Prostate gland (tissue), 2 donors: ENCODE measurements at regions of chr2 and their contacts with region 1.

Region 1: DNA sequence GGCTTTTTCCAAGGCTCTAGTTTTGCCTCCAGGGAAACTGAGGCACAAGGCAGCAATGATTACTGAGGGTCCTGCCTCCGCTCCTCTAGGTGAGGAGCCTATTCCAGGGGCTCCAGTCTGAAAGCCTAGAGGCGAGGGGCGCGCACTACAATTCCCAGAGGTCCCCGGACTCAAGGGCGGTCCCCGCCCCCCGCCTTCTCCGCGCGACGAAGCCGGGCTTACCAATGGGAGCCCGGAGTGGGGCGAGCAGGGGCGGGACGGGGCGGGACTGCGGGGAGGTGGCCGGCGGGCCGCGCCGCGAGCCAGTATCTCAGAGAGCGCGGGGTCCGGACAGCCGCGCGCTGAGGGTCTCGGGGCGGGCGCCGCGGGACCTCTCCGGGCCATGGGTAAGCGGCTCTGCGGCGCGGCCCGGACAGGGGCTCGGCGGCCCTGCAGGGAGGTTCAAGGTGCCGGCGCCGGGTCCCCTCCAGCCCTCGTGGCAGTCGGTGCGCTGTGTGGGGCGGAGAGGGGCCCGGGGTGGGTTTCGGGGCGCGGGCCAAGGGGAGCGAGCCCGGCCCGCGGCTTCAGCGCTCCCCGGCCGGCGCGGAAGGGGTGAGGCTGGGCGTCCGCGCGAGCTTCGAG is at the start of gene ARID5A:
- DNase-seq: peak; percentile 93
- H3K4me3 ChIP-seq: peak within 1 kb of the TSS; percentile 63 to 64
- H3K27ac ChIP-seq: peak within 1 kb of the TSS; percentile 86 to 87
- H3K4me1 ChIP-seq: peaks cover 15% of the 10 kb centered on the region
- H3K27me3 ChIP-seq: no peaks in the 10 kb centered on the region
- CTCF ChIP-seq: peak in 3 of 4 experiments; percentile 14 to 68 (median 66)
- POLR2A ChIP-seq: peak; percentile 99
- total RNA-seq, gene ARID5A: 23.0 to 54.6 TPM

Region 2: DNA sequence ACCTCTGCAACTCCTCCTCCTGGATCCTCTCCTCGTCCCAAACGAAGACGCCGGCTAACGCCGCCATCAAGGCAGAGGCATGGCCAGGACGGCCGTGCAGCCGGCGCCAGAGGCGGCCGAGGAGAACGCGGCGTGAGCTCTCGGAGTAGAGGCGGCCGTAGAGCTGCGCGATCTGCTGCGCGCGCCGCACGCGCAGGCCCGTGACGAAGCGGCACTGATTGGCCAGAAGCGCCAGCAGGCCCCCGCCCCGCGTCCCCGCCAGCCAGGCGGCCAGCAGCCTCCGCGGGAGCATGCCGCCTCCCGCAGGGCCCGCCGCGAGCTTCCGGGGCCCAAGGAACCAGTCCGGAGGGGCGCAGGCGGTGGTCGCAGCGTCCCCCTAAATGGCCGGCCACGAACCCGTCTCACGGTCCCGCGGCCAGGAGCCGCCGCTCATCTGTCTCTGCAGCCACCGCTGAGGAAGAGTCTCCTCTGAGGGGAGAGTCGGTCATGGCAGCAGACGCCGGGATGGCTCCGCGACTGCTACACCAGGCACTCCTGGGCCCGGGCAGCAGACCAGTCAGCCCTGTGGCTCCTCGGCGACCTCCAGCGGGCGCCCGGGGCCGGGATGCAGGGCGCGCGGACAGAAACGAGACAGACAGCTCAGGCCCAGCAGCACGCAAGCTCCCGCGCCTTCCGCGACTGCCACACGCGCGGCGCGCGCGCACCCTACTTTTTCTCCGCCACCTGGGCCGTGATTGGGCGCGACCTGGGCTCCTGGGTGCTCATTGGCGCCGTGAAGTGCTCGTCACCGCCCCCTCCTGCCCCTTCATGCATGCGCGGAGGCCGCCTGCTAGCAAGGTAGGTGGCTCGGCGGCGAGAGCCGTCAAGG is 328.2 kb before region 1 on chr2 and contains the start of gene STARD7:
- intact Hi-C with region 1: loop called (anchors 10 kb)
- DNase-seq: peak; percentile 98
- H3K4me3 ChIP-seq: peak within 1 kb of the TSS; percentile 92 to 97
- H3K27ac ChIP-seq: peak within 1 kb of the TSS; percentile 91 to 93
- H3K4me1 ChIP-seq: peaks cover 12% of the 10 kb centered on the region
- H3K27me3 ChIP-seq: no peaks in the 10 kb centered on the region
- CTCF ChIP-seq: peak; percentile 8 to 36 (median 18)
- POLR2A ChIP-seq: peak; percentile 92
- total RNA-seq, gene STARD7: 93.1 to 141 TPM

Region 3: DNA sequence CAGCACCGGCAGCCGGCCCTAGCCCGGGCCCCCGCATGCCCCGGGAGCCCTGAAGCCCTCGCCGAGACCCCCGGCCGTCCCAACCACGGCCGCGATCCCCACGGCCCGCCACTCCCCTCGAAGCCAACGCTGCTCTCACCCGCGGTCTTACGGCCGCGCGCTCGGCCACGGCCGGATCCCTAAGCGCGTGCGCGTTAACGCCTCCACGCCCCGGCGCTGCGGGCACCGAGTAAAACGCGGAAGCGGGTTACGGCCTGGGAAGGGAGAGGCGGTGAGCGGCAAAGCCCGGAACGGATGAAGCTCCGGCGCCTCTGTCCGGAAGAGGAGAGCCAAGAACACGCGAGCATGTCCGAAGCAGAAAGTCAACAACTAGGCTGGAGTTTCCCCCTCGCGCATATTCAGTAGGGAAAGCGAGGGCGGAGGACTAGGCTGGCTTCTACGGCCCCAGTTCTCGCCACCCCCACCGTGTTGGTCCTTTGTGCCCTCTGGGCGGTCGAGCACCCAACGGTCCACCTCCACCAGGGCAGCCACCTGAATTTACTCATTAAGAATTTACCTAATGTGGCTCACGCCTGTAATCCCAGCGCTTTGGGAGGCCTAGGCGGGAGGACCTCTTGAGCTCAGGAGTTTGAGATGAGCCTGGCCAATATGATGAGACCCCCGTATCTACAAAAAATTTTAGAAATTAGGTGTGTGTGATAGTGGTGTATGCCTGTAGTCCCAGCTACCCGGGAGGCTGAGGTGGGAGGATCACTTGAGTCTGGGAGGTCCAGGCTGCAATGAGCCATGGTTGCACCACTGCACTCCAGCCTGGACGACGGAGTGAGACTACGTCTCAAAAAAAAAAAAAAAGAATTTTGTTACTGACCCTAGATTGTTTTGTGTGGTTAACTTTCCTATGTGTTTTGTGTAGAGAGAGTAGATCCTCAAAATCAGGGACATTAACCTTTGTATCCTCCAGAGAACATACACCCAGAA is 101.9 kb after region 1 on chr2 and contains the start of gene KANSL3:
- intact Hi-C with region 1: loop called (anchors 5 kb)
- DNase-seq: peak; percentile 85
- H3K4me3 ChIP-seq: peak within 1 kb of the TSS; percentile 82 to 89
- H3K27ac ChIP-seq: peak within 1 kb of the TSS; percentile 92 to 96
- H3K4me1 ChIP-seq: no peaks in the 10 kb centered on the region
- H3K27me3 ChIP-seq: no peaks in the 10 kb centered on the region
- CTCF ChIP-seq: peak in 2 of 4 experiments; percentile 19 to 39
- POLR2A ChIP-seq: peak; percentile 91
- total RNA-seq, gene KANSL3: 41.3 to 70.0 TPM

Region 4: GRCh38 chr2:96801005-96801785 is 264.6 kb after region 1 on chr2:
- intact Hi-C with region 1: loop called (anchors 5 kb)
- DNase-seq: peak; percentile 83
- H3K4me3 ChIP-seq: no peak overlapping the region
- H3K27ac ChIP-seq: no peak overlapping the region
- H3K4me1 ChIP-seq: no peaks in the 10 kb centered on the region
- H3K27me3 ChIP-seq: no peaks in the 10 kb centered on the region
- CTCF ChIP-seq: peak; percentile 75 to 95 (median 84)
- POLR2A ChIP-seq: no peak

Region 5: DNA sequence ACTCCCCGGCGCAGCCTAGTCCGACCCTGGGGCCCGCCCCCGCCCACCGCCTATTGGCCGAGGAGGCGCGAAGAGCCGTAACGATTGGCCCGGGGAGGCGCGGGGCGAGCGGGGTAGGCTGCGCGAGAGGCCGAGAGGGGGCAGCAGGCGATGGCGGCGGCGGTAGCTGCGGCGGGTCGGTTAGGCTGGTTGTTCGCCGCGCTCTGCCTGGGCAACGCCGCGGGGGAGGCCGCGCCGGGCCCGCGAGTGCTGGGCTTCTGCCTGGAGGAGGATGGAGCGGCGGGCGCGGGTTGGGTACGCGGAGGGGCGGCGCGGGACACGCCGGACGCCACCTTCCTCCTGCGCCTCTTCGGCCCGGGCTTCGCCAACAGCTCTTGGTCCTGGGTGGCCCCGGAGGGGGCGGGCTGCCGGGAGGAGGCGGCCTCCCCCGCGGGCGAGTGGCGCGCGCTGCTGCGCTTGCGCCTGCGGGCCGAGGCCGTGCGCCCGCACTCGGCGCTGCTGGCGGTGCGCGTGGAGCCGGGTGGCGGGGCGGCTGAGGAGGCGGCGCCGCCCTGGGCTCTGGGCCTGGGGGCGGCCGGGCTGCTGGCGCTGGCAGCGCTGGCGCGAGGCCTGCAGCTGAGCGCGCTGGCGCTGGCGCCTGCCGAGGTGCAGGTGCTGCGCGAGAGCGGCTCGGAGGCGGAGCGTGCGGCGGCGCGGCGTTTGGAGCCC is 279.7 kb after region 1 on chr2 and contains the start of gene CNNM3:
- intact Hi-C with region 1: loop called (anchors 5 kb)
- DNase-seq: peak; percentile 97
- H3K4me3 ChIP-seq: peak within 1 kb of the TSS; percentile 52 to 70
- H3K27ac ChIP-seq: peak within 1 kb of the TSS; percentile 94 to 96
- H3K4me1 ChIP-seq: peaks cover 16% of the 10 kb centered on the region
- H3K27me3 ChIP-seq: no peaks in the 10 kb centered on the region
- CTCF ChIP-seq: peak; percentile 18 to 88 (median 64)
- POLR2A ChIP-seq: peak; percentile 81
- total RNA-seq, gene CNNM3: 29.7 to 29.8 TPM

Region 6: DNA sequence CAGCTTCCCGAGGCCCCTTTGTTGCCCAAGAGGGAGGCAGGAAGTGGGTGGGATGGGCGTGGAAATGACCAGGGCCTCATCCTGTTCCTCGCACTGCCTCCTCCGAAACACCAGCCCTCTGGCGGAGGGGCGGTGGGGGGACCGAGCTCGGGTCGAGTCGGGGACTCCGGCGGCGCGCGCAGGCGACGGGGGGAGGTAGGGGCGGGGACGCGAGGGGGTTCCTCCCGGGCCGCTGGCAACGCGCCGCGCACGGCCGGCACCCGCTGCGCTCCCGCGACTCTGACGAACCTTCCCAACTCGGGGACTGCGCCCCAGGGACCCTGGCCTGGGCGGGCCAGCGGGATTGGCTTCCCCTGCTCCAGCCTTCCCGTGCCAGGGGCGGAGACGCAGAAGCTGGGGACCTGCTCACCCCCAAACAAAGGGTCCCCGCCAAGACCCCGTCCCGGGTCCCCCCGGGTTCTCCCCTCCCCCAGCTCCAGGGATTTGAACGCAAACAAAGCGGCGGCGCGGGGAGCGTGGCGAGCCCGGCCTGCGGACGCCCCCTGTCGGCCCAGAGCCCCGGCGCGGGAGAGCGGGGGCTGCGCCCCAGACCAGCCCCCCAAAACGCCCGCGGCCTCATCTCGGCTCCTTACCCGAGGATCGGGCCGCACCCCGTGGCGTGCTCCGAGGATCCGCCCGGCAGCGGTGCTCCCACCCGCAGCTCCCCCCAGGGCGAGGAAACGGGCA is 332.2 kb after region 1 on chr2:
- intact Hi-C with region 1: loop called (anchors 10 kb)
- DNase-seq: peak; percentile 86
- H3K4me3 ChIP-seq: peak overlapping the region; percentile 99 to 100
- H3K27ac ChIP-seq: peak overlapping the region; percentile 98 to 99
- H3K4me1 ChIP-seq: peaks cover 11% of the 10 kb centered on the region
- H3K27me3 ChIP-seq: no peaks in the 10 kb centered on the region
- CTCF ChIP-seq: peak; percentile 47 to 77 (median 64)
- POLR2A ChIP-seq: no peak

Region 7: DNA sequence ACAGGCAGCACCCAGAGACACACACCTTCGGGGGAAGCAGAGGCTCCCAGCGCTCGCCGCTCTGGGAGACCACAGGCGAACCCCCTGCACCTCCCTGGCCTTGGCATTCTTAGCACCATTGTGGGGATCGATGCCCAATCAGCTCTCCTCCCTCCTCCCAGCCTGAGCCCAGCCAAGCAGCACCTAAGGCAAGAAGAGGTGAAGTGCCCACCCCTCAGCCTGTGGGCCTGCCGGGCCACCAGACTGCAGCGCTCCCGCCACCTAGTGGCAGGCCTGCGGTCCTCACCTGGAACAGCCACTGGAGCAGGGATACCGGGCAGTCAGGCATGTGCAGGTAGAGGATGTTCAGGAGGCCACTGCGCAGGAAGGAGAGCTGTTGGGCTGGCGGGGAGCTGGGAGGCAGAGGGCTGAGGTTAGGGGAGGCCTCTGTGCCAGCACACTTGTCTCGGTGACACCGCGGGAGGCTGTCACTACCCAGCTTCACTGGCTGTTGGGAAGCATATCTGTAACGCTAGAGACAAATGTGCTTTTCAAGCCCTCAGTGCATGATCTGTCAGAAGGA is 414.6 kb after region 1 on chr2:
- intact Hi-C with region 1: loop called (anchors 10 kb)
- DNase-seq: peak; percentile 85
- H3K4me3 ChIP-seq: no peak overlapping the region
- H3K27ac ChIP-seq: peak overlapping the region; percentile 7 to 15
- H3K4me1 ChIP-seq: peaks cover 7% of the 10 kb centered on the region
- H3K27me3 ChIP-seq: no peaks in the 10 kb centered on the region
- CTCF ChIP-seq: peak; percentile 91 to 97 (median 94)
- POLR2A ChIP-seq: no peak